Caco-2 (cell line): ENCODE measurements at regions of chr10 and their contacts with region 1.

Region 1: DNA sequence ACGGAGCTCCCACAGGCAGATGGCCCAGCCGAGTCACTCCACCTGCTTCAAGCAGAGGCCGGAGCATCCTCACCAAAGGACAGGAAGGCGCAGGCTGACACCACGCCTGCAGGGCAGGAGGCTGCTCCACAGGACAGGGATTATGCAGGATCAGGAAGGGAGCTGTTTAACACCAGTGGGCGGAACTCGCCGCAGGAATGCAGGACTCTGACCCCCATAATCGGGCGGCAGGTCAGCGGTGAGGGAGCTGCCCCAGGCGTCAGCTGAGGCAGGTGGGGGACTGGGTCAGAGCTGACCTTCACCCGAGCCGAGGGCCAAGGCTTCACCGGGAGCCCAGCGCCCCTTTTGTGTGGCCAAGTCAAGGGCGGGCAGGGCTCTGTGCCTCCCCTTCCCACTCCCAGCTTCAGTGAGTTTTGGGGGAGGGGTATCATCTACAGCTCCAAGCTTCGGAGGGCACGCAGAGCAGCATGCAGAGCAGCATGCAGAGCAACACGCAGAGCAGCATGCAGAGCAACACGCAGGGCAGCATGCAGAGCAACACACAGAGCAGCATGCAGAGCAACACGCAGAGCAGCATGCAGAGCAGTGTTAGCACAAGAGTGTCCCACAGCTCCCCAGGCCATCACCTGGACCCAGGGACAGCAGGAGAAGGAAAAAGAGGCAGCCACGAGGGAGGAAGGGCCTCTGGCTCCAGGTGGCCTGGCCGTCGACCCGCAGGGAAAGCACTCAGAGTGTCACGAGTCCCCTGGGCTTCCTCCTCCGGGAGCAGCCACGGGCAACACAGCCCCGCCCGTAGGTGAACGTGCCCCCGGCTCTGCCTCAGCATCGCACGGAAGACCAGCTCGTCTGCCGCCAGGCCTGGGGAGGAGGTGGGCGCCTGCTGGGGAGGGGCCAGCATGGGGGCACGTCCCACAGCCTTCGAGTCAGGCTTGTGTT is 151.7 kb upstream of the PPP2R2D start:
- DNase-seq: peak; percentile 89 to 95
- H3K4me3 ChIP-seq: peak overlapping the region; percentile 16; the same call in 1 of the 2 replicates
- H3K4me3 Mint-ChIP-seq: peak overlapping the region; percentile 58
- H3K27ac Mint-ChIP-seq: peak overlapping the region; percentile 84
- H3K4me1 ChIP-seq: peaks cover 54% of the 10 kb centered on the region
- H3K4me1 Mint-ChIP-seq: peaks cover 33% of the 10 kb centered on the region
- H3K27me3 ChIP-seq: no peaks in the 10 kb centered on the region
- H3K27me3 Mint-ChIP-seq: no peaks in the 10 kb centered on the region
- CTCF ChIP-seq: peak in 1 of 2 experiments; percentile 30

Region 2: GRCh38 chr10:131676511-131677421 is 72.3 kb before region 1 on chr10:
- CTCF ChIA-PET with region 1: no interaction called
- POLR2A ChIA-PET with region 1: no interaction called
- intact Hi-C with region 1: no loop called
- DNase-seq: no peak
- H3K4me3 ChIP-seq: no peak overlapping the region
- H3K4me3 Mint-ChIP-seq: no peak overlapping the region
- H3K27ac Mint-ChIP-seq: no peak overlapping the region
- H3K4me1 ChIP-seq: no peaks in the 10 kb centered on the region
- H3K4me1 Mint-ChIP-seq: no peaks in the 10 kb centered on the region
- H3K27me3 ChIP-seq: no peaks in the 10 kb centered on the region
- H3K27me3 Mint-ChIP-seq: peaks cover 7% of the 10 kb centered on the region
- CTCF ChIP-seq: no peak

Region 3: DNA sequence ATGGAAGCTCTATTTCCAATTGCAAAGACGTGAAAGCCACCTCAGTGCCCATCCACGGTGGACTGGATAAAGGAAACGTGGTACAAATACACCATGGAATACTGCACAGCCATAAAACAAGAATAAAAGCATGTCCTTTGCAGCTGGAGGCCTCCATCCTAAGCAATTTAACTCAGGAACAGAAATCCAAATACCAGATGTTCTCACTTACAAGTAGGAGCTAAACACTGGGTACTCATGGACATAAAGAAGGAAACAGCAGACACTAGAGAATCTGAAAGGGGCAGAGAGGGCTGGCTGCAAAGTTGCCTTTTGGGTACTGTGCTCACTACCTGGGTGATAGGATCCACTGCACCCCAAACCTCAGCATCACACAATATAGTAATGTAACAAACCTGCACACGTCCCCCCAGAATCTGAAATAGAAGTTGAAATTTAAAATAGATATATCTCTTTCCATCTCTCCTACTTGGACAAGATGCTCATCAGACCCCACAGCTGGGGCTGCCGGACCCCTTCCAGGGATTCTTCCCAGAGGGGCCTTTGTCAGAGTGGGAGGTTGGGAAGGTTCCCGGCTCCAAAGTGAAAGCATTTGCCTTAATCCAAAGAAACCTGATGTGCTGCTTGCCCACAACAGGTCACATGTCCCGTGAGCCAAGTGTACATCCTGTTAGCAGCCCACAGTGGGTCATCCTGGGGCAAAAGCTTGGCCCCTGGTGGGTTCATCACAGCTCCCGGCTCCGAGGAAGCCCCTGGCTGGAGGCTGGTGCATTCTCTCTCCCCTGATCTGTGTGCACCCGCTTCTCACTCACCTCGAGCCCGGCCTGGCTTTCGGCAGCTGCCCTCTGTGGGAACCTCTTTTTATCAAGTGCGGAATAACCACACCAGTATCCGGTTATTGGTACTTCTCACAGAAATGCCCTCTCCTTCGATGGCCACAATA is 20.5 kb before region 1 on chr10:
- CTCF ChIA-PET with region 1: no interaction called
- POLR2A ChIA-PET with region 1: no interaction called
- intact Hi-C with region 1: loop called (anchors 2 kb)
- DNase-seq: no peak
- H3K4me3 ChIP-seq: no peak overlapping the region
- H3K4me3 Mint-ChIP-seq: peak overlapping the region; percentile 11
- H3K27ac Mint-ChIP-seq: peak overlapping the region; percentile 78
- H3K4me1 ChIP-seq: peaks cover 17% of the 10 kb centered on the region
- H3K4me1 Mint-ChIP-seq: peaks cover 11% of the 10 kb centered on the region
- H3K27me3 ChIP-seq: no peaks in the 10 kb centered on the region
- H3K27me3 Mint-ChIP-seq: no peaks in the 10 kb centered on the region
- CTCF ChIP-seq: no peak

Region 4: GRCh38 chr10:131786756-131787605 is 37.9 kb after region 1 on chr10:
- CTCF ChIA-PET with region 1: interaction called, 4 read pairs
- POLR2A ChIA-PET with region 1: no interaction called
- intact Hi-C with region 1: loop called (anchors 5 kb)
- DNase-seq: peak in 1 of 2 experiments; percentile 41
- H3K4me3 ChIP-seq: no peak overlapping the region
- H3K4me3 Mint-ChIP-seq: no peak overlapping the region
- H3K27ac Mint-ChIP-seq: no peak overlapping the region
- H3K4me1 ChIP-seq: no peaks in the 10 kb centered on the region
- H3K4me1 Mint-ChIP-seq: no peaks in the 10 kb centered on the region
- H3K27me3 ChIP-seq: no peaks in the 10 kb centered on the region
- H3K27me3 Mint-ChIP-seq: no peaks in the 10 kb centered on the region
- CTCF ChIP-seq: peak; percentile 60 to 79